Dendritic cell treated with granulocyte-macrophage colony-stimulating factor and Interleukin-4, amounts not matched to agents 40 ng/mL and 50 ng/mL, for 4 days (primary cell): ENCODE measurements at regions of chr3 and their contacts with region 1.

Region 1: GRCh38 chr3:7285505-7285904 is 424.6 kb downstream of the GRM7 start:
- H3K4me3 Mint-ChIP-seq: no peak overlapping the region
- H3K27ac Mint-ChIP-seq: no peak overlapping the region
- H3K4me1 Mint-ChIP-seq: peaks cover 4% of the 10 kb centered on the region
- H3K27me3 Mint-ChIP-seq: no peaks in the 10 kb centered on the region

Region 2: DNA sequence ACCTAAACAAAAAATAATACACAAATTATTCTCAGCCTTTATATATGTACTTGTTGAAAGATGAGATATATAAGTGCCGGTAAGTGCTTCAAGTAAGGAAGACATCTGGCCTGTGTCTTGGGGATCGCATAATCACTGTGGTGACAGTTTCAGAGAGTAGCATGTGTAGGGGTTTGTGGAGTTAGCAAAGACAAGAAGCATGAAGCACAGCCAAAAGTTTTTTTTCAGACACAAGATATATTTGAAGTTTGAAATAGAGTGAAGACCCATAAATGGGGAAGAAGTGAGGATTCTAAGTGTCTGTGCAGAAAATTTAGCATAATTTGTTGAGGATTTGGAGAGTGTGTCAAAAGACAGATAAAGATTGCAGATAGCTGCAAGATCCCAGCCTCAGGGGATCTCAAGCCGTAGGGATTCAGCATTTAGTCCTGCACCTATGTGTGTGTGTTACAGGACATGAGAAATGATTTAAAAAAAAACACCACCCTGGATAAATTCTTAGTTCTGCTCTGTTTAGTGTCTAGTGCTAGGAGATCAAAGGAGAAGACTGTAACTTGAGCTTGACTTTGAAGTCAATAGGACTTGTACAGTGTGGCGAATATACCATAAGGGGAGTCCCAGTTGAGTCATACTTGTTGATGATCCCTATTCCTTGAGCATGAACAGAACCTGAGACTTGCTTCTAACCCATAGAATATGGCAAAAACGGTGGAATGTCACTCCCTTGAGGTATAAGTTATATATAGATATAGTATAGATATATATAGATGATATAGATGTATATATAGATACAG is 548.5 kb before region 1 on chr3:
- intact Hi-C with region 1: no loop called
- H3K4me3 Mint-ChIP-seq: no peak overlapping the region
- H3K27ac Mint-ChIP-seq: no peak overlapping the region
- H3K4me1 Mint-ChIP-seq: no peaks in the 10 kb centered on the region
- H3K27me3 Mint-ChIP-seq: no peaks in the 10 kb centered on the region

Region 3: GRCh38 chr3:7630925-7631324 is 345.4 kb after region 1 on chr3:
- intact Hi-C with region 1: no loop called
- H3K4me3 Mint-ChIP-seq: peak overlapping the region; percentile 39
- H3K27ac Mint-ChIP-seq: peak overlapping the region; percentile 67
- H3K4me1 Mint-ChIP-seq: peaks cover 31% of the 10 kb centered on the region
- H3K27me3 Mint-ChIP-seq: no peaks in the 10 kb centered on the region

Region 4: DNA sequence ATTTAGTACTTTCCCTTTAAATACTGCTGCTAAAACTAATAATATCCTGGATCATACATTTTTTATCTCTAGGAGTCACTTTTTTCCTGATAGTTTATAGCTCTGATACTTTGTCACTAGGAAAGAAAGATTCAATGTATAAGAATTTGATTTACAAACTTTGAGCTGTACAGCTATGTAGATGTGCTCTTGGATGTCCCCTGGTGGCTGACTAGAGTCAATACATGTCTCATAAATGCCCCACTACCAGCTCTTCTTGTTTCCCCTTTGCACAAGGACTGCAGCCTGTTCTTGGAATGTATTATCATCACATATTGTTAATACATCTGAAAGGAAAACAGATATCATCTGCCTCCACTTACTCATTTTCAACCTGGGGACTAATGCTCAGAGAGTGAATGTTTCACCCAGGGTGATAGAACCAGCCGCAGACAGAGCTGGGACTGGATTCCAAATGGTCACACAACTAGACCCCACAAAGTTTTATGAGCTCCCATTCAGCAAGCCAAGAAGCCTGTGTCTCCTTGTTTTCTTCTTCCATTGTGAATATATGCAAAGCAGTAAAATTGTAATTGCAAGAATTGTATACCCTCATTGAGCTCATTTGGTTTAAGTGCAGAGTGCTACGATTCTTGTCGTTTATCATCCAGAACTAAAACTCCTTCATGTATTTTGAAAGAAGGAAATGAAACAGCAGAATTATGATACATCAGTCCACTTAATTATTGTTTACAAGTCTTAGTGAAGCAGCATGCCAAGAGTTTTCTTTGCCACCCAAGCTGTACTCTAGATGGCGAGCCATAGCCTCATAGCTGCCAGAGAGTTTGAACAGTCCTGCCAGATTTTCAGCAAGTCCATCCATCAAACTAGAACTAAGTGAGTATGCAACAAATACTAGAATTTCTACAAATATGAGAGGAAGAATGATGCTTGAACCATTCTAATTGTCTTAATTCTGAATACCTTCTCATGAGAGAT is 954.5 kb after region 1 on chr3:
- intact Hi-C with region 1: loop called (anchors 10 kb)
- H3K4me3 Mint-ChIP-seq: no peak overlapping the region
- H3K27ac Mint-ChIP-seq: no peak overlapping the region
- H3K4me1 Mint-ChIP-seq: no peaks in the 10 kb centered on the region
- H3K27me3 Mint-ChIP-seq: no peaks in the 10 kb centered on the region